Prostate gland (tissue), 2 donors: ENCODE measurements at regions of chr21 and their contacts with region 1.

Region 1: GRCh38 chr21:37366482-37367316 is at the start of gene DYRK1A:
- DNase-seq: peak; percentile 98
- H3K4me3 ChIP-seq: peak within 1 kb of the TSS; percentile 56 to 96
- H3K27ac ChIP-seq: peak within 1 kb of the TSS; percentile 98 to 100
- H3K4me1 ChIP-seq: peaks cover 11% of the 10 kb centered on the region
- H3K27me3 ChIP-seq: no peaks in the 10 kb centered on the region
- CTCF ChIP-seq: peak in 2 of 4 experiments; percentile 5 to 11
- POLR2A ChIP-seq: peak; percentile 53
- total RNA-seq, gene DYRK1A: 70.5 to 146 TPM

Region 2: DNA sequence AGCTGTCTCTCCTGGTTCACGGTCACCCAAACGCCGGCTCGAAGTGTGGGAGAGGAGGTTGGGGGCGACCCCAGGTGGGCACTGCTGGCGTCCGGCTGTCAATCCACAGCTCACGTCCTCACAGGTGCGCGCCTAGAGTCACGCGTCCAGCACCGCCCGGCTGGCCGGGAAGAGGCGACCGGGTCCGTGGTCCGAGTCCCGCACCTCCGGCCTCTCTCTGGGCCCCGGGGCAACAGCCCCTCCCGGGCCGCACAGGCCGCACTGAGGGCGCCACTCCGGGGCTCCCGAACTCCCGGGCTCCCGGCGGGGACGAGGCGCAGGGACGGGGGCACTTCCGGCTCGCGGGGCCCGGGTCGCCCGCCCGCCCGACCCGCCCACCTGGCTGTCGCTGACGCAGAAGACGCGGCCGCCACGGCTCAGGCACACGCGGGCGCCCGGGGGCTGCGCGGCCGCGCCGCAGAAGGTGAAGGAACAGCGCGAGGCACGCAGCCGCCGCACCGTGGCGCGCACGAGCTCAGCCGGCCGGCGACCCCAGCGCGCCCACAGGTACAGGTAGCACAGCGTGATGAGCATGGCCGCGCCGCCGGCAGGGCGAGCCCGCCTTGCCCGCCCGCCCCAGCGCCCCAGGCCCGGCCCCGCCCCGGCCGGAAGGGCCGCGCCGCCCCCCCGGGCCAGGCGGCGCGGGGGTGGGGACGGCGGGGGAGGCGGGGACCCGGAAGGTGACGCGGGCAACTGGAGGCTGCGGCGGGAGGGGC is 400.5 kb before region 1 on chr21 and contains the start of gene HLCS:
- intact Hi-C with region 1: loop called (anchors 10 kb)
- DNase-seq: peak; percentile 60
- H3K4me3 ChIP-seq: peak within 1 kb of the TSS; percentile 66 to 72
- H3K27ac ChIP-seq: peak within 1 kb of the TSS; percentile 91
- H3K4me1 ChIP-seq: no peaks in the 10 kb centered on the region
- H3K27me3 ChIP-seq: no peaks in the 10 kb centered on the region
- CTCF ChIP-seq: peak in 2 of 4 experiments; percentile 26 to 29
- POLR2A ChIP-seq: peak; percentile 29
- total RNA-seq, gene HLCS: 40.9 to 41.8 TPM

Region 3: DNA sequence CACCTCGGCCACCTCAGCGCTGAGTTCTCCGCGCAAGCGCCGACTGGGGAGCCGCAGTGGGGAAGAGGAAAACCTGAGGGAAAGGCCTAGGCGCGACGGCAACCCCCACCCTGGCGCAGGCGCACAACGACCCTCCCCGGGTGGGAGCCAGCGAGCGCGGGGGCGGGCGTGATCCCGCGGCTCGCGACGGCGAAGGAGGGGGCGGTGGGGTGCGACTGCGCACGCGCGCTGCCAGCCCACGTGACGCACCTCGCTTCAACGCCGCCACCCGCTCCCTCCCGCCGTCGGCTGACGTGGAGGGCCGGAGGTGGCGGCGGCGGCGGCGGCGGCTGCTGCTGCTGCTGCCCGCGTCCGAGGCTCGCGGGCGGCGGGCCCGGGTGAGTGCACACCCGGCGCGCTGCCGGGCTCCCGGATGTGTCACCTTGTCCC is 293.7 kb before region 1 on chr21 and contains the starts of genes PIGP and TTC3:
- intact Hi-C with region 1: loop called (anchors 5 kb)
- DNase-seq: peak; percentile 92
- H3K4me3 ChIP-seq: peak within 1 kb of the TSS; percentile 87 to 96
- H3K27ac ChIP-seq: peak within 1 kb of the TSS; percentile 96 to 99
- H3K4me1 ChIP-seq: peaks cover 6% of the 10 kb centered on the region
- H3K27me3 ChIP-seq: no peaks in the 10 kb centered on the region
- CTCF ChIP-seq: peak in 1 of 4 experiments; percentile 16
- POLR2A ChIP-seq: peak; percentile 95
- total RNA-seq, gene PIGP: 18.0 to 54.5 TPM
- total RNA-seq, gene TTC3: 169 to 201 TPM

Region 4: GRCh38 chr21:37153196-37153934 is 213.3 kb before region 1 on chr21:
- intact Hi-C with region 1: loop called (anchors 10 kb)
- DNase-seq: peak; percentile 40
- H3K4me3 ChIP-seq: no peak overlapping the region
- H3K27ac ChIP-seq: peak overlapping the region; percentile 33 to 50
- H3K4me1 ChIP-seq: no peaks in the 10 kb centered on the region
- H3K27me3 ChIP-seq: no peaks in the 10 kb centered on the region
- CTCF ChIP-seq: no peak
- POLR2A ChIP-seq: no peak

Region 5: GRCh38 chr21:37267269-37268184 is 99.2 kb before region 1 on chr21 and contains the start of gene VPS26C:
- intact Hi-C with region 1: loop called (anchors 2 kb)
- DNase-seq: peak; percentile 98
- H3K4me3 ChIP-seq: peak within 1 kb of the TSS; percentile 74 to 81
- H3K27ac ChIP-seq: peak within 1 kb of the TSS; percentile 94 to 96
- H3K4me1 ChIP-seq: peaks cover 4% of the 10 kb centered on the region
- H3K27me3 ChIP-seq: no peaks in the 10 kb centered on the region
- CTCF ChIP-seq: peak in 1 of 4 experiments; percentile 3
- POLR2A ChIP-seq: peak; percentile 75
- total RNA-seq, gene VPS26C: 36.8 to 46.1 TPM

Region 6: DNA sequence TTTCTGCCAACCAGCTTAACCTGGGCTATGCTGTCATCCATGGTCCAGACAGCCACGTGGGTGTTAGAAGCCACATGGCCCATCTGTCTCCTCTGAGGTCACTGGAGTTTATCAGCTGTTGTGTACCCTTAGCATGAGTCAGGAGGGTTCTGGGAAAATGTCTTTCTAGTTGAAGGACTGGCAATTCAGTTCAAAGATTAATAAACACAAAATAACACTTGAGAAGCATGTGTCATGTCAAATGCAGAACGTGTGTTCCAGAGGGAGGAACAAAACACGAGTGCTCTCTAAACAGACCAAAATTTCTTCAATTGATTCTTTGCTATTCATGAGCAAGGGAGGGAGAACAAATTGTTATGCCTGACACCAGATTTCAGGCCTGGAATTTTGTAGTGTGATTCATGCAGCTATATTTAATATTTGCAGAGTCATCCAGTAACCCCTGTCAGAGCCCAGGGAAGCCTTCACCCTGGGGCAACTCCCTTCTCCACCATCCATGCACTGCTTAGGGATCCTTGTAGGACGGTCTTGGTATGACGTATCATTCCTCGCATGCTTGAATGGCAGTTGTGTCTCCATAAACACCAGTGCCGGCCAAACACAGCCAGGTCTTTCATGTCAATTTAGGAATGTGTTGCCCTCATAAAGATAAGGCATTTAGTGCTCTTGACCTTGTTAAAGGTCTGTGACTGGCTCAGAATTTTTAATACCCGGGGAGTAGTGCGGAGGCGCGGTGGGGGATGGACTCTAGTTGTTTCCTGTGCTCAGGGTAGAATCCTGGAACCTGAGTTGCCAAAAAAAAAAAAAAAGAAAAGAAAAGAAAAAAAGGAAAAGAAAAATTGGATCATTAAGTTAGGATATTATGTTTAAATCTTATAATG is 27.8 kb before region 1 on chr21:
- intact Hi-C with region 1: loop called (anchors 2 kb)
- DNase-seq: no peak
- H3K4me3 ChIP-seq: no peak overlapping the region
- H3K27ac ChIP-seq: peak overlapping the region; percentile 1 to 15
- H3K4me1 ChIP-seq: no peaks in the 10 kb centered on the region
- H3K27me3 ChIP-seq: no peaks in the 10 kb centered on the region
- CTCF ChIP-seq: no peak
- POLR2A ChIP-seq: no peak

Region 7: GRCh38 chr21:37563641-37564340 is 197.1 kb after region 1 on chr21:
- intact Hi-C with region 1: loop called (anchors 5 kb)
- DNase-seq: peak; percentile 93
- H3K4me3 ChIP-seq: peak overlapping the region; percentile 54 to 55
- H3K27ac ChIP-seq: peak overlapping the region; percentile 77 to 86
- H3K4me1 ChIP-seq: no peaks in the 10 kb centered on the region
- H3K27me3 ChIP-seq: no peaks in the 10 kb centered on the region
- CTCF ChIP-seq: peak in 3 of 4 experiments; percentile 35 to 61 (median 54)
- POLR2A ChIP-seq: peak; percentile 68